ENCODE measurements at regions of chr22 and their contacts with region 1.

Region 1: DNA sequence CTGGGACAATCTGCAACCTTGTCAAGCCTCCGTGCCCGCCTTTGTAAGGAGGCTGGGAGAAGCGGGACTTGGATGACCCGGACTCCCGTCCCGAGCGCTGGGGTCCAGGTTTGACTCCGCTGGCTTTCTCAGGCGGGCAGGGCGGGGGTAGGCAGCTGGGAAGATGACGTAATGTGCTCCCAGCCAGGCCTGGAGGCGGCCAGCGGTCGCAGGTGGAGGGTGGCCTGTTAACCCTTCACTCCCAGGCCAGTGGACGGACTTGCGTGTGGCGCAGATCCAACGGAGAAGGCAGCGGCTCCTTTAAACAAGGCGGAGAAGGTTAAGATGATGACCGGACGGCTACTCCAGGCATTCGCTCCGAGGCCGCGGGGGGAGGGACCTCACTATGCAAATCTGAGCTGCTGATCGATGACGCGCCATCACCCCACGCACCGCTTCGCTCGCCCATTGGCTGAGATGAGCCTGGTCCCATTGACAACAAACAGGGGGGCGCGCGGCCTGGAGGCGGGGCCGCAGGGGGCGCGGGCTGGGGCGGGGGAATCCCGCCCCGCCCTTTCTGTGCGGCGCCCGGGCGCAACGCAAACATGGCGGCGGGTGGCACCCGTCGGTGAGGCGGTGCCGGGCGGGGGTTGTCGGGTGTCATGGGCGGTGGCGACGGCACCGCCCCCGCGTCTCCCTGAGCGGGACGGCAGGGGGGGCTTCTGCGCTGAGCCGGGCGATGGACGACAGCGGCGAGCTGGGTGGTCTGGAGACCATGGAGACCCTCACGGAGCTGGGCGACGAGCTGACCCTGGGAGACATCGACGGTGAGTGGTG is at the start of gene SREBF2:
- DNase-seq: peak; percentile 99
- ATAC-seq: peak; percentile 86
- H3K4me3 ChIP-seq: peak within 1 kb of the TSS; percentile 49 to 92 (median 90)
- H3K4me3 Mint-ChIP-seq: peak within 1 kb of the TSS; percentile 96
- H3K27ac ChIP-seq: peak within 1 kb of the TSS; percentile 99 to 100
- H3K27ac Mint-ChIP-seq: peak within 1 kb of the TSS; percentile 99
- H3K4me1 ChIP-seq: peaks cover 20 to 36% of the 10 kb centered on the region in 2 donors
- H3K4me1 Mint-ChIP-seq: peaks cover 55% of the 10 kb centered on the region
- H3K27me3 ChIP-seq: no peaks in the 10 kb centered on the region
- H3K27me3 Mint-ChIP-seq: no peaks in the 10 kb centered on the region
- CTCF ChIP-seq: no peak
- total RNA-seq, gene SREBF2: 287 and 304 TPM in 2 replicates

Region 2: DNA sequence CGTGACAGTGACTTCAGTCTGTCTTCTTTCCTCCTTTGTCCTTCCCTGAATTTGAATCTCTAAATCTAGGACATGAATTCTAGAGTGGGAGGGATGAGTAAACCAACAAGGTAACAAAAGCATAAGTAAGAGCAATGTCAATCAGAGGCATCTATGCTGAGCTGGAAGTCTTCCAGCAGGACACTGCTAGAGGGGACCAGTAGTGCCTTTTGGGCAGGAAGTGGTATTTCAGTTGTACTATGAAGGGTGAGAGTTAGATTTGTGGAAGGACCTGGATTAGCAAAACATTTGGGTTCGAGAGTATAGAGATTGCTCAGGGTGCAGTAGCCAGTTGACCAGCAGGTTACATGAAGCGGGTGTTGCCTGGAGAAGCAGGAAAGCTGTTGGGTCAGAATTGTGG is 93.2 kb before region 1 on chr22:
- CTCF ChIA-PET with region 1: no interaction called
- POLR2A ChIA-PET with region 1: no interaction called
- intact Hi-C with region 1: no loop called
- DNase-seq: no peak
- ATAC-seq: no peak
- H3K4me3 ChIP-seq: no peak overlapping the region
- H3K4me3 Mint-ChIP-seq: no peak overlapping the region
- H3K27ac ChIP-seq: no peak overlapping the region
- H3K27ac Mint-ChIP-seq: peak overlapping the region; percentile 6
- H3K4me1 ChIP-seq: no peaks in the 10 kb centered on the region
- H3K4me1 Mint-ChIP-seq: peaks cover 2% of the 10 kb centered on the region
- H3K27me3 ChIP-seq: no peaks in the 10 kb centered on the region
- H3K27me3 Mint-ChIP-seq: no peaks in the 10 kb centered on the region
- CTCF ChIP-seq: no peak

Region 3: DNA sequence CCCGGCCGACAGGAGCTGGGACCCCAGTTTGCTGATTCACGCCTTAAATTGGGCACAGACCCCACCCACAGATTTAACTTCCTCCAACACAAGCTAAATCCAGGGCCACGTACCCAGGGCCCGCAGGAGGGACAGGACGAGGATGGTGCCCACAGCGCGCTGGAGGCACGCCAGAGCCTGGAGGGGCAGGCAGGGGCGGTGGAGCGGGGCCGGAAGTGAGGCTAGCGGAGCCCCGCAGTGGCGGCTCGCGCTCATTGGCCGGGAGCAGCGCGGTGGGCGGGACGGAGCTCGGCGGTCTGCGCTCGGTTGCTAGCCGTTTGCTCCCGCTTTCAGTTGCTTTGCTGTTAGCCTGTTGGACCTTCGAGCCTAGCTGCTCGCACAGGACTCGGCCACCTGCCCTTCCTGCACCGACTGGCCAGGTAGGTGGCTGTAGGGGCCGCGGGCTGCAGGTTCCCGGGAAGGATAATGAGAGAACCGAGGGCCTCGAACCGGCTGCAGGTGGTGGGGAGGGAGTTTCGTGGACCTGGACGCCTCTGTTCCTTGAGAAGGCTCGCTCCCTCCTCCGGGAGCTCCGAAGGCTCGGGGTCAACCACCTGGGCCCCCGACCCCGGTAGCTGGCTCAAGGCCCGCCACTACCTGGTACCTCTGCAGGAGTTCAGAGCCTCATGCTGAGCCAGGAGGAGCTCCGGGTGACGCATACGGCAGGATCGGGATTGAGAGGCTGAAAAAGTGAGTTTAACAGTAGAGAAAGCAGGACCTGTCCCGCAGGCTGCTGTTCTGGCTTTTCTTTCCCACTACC is 32.2 kb before region 1 on chr22 and contains the start of gene CCDC134:
- CTCF ChIA-PET with region 1: interaction called, 4 read pairs
- POLR2A ChIA-PET with region 1: interaction called, 8 read pairs
- intact Hi-C with region 1: loop called (anchors 2 kb)
- DNase-seq: peak; percentile 91
- ATAC-seq: peak; percentile 98
- H3K4me3 ChIP-seq: peak within 1 kb of the TSS; percentile 65 to 98 (median 96)
- H3K4me3 Mint-ChIP-seq: peak within 1 kb of the TSS; percentile 98
- H3K27ac ChIP-seq: peak within 1 kb of the TSS; percentile 90 to 91
- H3K27ac Mint-ChIP-seq: peak within 1 kb of the TSS; percentile 99
- H3K4me1 ChIP-seq: peaks cover 19 to 22% of the 10 kb centered on the region in 2 donors
- H3K4me1 Mint-ChIP-seq: peaks cover 24% of the 10 kb centered on the region
- H3K27me3 ChIP-seq: no peaks in the 10 kb centered on the region
- H3K27me3 Mint-ChIP-seq: no peaks in the 10 kb centered on the region
- CTCF ChIP-seq: no peak
- total RNA-seq, gene CCDC134: 17.4 and 18.1 TPM in 2 replicates

Region 4: DNA sequence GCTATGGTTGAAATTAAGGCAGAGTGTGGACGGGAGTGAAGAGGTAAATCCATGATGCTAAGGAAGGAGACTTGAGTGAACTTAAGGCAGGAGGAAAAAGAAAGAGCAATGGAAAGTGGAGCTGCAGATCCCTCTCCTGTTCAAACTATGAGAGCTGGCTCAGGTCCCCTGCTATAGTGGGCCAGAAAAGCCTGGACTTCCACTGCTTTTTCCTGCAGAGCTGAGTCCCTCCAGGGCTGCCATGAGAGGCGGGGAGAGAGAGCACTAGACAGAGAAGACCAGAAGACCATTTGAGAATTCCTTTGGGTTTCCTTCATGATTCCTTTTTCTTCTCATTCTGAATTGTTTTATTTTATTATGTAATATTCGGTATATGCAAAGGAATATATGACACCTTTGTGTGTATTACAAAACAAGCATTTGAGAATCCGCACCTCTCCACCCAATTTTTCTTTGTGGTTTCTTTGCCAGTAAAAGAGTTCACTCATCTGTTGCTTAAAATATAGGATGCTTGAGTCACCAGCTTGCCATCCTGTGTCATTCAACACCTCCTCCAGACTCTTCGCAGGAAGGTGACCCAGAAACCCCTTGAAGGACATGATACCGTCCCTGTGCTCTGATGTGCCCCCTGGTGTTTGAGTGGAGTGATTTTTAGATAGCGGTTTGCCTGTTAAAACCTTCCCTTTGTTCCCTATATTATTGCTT is 24.5 kb after region 1 on chr22:
- CTCF ChIA-PET with region 1: interaction called, 17 read pairs
- POLR2A ChIA-PET with region 1: interaction called, 20 read pairs
- intact Hi-C with region 1: loop called (anchors 1 kb)
- DNase-seq: peak; percentile 75
- ATAC-seq: peak; percentile 25
- H3K4me3 ChIP-seq: no peak overlapping the region
- H3K4me3 Mint-ChIP-seq: peak overlapping the region; percentile 40
- H3K27ac ChIP-seq: peak overlapping the region; percentile 10 to 63
- H3K27ac Mint-ChIP-seq: peak overlapping the region; percentile 80
- H3K4me1 ChIP-seq: peaks cover 52 to 62% of the 10 kb centered on the region in 2 donors
- H3K4me1 Mint-ChIP-seq: peaks cover 67% of the 10 kb centered on the region
- H3K27me3 ChIP-seq: no peaks in the 10 kb centered on the region
- H3K27me3 Mint-ChIP-seq: no peaks in the 10 kb centered on the region
- CTCF ChIP-seq: peak; percentile 78

Region 5: GRCh38 chr22:41910050-41911000 is 77.6 kb after region 1 on chr22:
- CTCF ChIA-PET with region 1: interaction called, 3 read pairs
- POLR2A ChIA-PET with region 1: interaction called, 5 read pairs
- intact Hi-C with region 1: loop called (anchors 2 kb)
- DNase-seq: peak; percentile 73
- ATAC-seq: peak; percentile 10
- H3K4me3 ChIP-seq: peak overlapping the region in 4 of 5 experiments; percentile 35 to 57 (median 50)
- H3K4me3 Mint-ChIP-seq: peak overlapping the region; percentile 83
- H3K27ac ChIP-seq: no peak overlapping the region
- H3K27ac Mint-ChIP-seq: peak overlapping the region; percentile 67
- H3K4me1 ChIP-seq: peaks cover 61% of the 10 kb centered on the region in 2 donors
- H3K4me1 Mint-ChIP-seq: peaks cover 51% of the 10 kb centered on the region
- H3K27me3 ChIP-seq: peaks cover 0 to 44% (median 21%) of the 10 kb centered on the region in 4 experiments
- H3K27me3 Mint-ChIP-seq: peaks cover 9% of the 10 kb centered on the region
- CTCF ChIP-seq: no peak

Region 6: GRCh38 chr22:41925655-41926460 is 93.1 kb after region 1 on chr22:
- CTCF ChIA-PET with region 1: interaction called, 12 read pairs
- POLR2A ChIA-PET with region 1: interaction called, 13 read pairs
- intact Hi-C with region 1: no loop called
- DNase-seq: peak; percentile 88
- ATAC-seq: peak; percentile 46
- H3K4me3 ChIP-seq: peak overlapping the region; percentile 59 to 96 (median 88)
- H3K4me3 Mint-ChIP-seq: peak overlapping the region; percentile 100
- H3K27ac ChIP-seq: peak overlapping the region; percentile 94 to 95
- H3K27ac Mint-ChIP-seq: peak overlapping the region; percentile 99
- H3K4me1 ChIP-seq: peaks cover 70 to 86% of the 10 kb centered on the region in 2 donors
- H3K4me1 Mint-ChIP-seq: peaks cover 67% of the 10 kb centered on the region
- H3K27me3 ChIP-seq: no peaks in the 10 kb centered on the region
- H3K27me3 Mint-ChIP-seq: no peaks in the 10 kb centered on the region
- CTCF ChIP-seq: peak; percentile 83

Region 7: DNA sequence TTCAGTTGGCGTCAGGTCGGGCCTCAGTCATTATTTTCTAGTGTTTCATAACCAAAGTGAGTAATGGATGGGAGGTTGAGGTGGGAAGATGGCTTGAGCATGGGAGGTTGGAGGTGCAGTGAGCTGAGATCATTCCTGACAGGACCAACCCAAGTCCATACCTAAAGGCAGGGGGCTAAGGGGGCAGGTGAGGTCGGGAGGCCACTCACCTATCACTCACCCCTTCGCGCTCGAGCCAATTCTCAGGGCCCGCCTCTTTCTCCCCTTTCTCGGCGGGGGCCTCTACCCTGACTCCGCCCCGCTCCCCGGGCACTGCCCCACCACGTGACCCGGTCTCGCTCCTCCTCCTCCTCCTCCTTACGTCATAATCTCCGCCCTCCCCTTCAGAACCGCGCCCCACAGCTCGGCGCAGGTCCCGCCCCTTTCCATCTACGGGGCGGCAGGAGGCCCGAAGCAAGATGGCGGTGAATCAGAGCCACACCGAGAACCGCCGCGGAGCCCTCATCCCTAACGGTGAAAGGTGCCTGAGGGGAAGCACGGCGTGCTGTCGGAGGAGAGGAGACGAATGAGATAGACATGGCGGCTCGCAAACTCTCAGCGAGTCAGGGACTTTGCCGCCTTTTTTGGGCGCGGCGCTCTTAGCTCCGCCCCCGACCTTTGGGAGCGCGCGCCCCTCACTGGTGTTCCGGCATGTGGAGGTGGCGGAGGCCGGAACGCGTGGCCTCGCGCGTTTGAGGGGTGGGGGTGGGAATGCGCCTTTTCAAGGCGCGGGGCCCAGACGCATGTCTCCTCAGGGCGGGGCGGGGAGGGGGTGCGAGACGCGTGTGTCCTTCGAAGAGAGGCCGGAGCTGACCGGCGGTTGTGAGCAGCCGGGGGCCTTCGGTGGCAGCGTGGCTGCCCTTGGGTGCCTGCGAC is 165.9 kb after region 1 on chr22 and contains the start of gene WBP2NL:
- CTCF ChIA-PET with region 1: no interaction called
- POLR2A ChIA-PET with region 1: no interaction called
- intact Hi-C with region 1: loop called (anchors 2 kb)
- DNase-seq: peak; percentile 95
- ATAC-seq: peak; percentile 100
- H3K4me3 ChIP-seq: peak within 1 kb of the TSS; percentile 36 to 88 (median 76)
- H3K4me3 Mint-ChIP-seq: peak within 1 kb of the TSS; percentile 99
- H3K27ac ChIP-seq: peak within 1 kb of the TSS; percentile 72 to 81
- H3K27ac Mint-ChIP-seq: peak within 1 kb of the TSS; percentile 99
- H3K4me1 ChIP-seq: peaks cover 15 to 23% of the 10 kb centered on the region in 2 donors
- H3K4me1 Mint-ChIP-seq: peaks cover 25% of the 10 kb centered on the region
- H3K27me3 ChIP-seq: peaks cover 0 to 10% (median 3%) of the 10 kb centered on the region in 4 experiments
- H3K27me3 Mint-ChIP-seq: no peaks in the 10 kb centered on the region
- CTCF ChIP-seq: no peak
- total RNA-seq, gene WBP2NL: 10.1 and 10.4 TPM in 2 replicates